ENCODE measurements at regions of chr10 and their contacts with region 1.

Region 1: DNA sequence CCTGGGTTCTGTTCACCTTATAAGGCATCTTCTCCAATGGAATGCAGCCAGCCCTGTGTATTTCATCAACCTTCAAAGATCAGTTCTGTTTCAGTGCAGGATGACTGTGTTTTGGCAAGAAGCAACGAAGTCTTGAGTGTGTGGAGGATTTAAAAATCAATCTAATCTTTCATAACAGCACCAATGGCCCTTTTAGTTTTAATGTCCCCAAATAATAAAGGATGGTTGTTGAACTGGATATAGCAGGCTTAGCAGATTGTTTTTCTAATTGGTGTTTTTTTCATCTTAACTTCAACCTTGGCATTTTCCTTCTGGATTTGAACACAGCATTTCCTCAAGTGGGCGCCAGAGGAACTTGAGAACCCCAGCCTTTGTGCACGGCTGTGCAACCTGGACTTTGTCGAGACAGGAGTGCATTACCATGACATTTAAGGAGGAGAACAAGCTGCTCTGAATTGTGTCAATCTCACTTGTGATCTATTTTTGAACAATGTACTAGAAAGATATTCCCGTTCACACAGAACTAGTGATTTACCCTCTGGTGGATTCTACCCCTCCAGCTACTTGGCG is 313.3 kb upstream of the AKR1E2 start:
- DNase-seq: peak; percentile 44
- H3K4me3 ChIP-seq: no peak overlapping the region
- H3K27ac ChIP-seq: no peak overlapping the region
- H3K4me1 ChIP-seq: peaks cover 0 to 20% (median 0%) of the 10 kb centered on the region in 4 donors
- H3K27me3 ChIP-seq: no peaks in the 10 kb centered on the region
- CTCF ChIP-seq: peak; percentile 32 to 68 (median 49)
- EP300 ChIP-seq: no peak
- POLR2A ChIP-seq: no peak

Region 2: DNA sequence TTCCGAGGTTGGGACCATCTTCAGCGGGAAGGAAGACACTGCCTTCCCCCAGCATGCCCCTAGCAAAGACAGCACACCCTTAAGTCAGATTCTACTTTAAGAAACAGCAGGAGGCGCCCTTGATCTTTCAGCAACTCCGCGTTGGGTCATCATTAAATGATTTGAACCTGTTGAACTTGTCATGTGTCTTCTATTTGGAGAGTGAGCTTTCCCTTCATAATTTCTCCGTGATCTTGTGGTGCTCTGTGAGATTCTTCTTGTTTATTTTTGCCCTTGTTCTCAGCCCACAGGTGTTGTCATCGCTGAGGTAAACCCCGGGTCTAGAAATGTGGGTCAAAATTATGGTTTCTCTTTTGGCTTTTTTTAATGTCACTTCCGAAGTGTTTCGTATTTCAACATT is 1290.7 kb before region 1 on chr10:
- in situ Hi-C with region 1: loop called in 1 of 4 experiments (anchors 25 kb)
- intact Hi-C with region 1: no loop called
- DNase-seq: no peak
- H3K4me3 ChIP-seq: no peak overlapping the region
- H3K27ac ChIP-seq: no peak overlapping the region
- H3K4me1 ChIP-seq: peaks cover 0 to 4% (median under 1%) of the 10 kb centered on the region in 4 donors
- H3K27me3 ChIP-seq: no peaks in the 10 kb centered on the region
- CTCF ChIP-seq: no peak
- EP300 ChIP-seq: no peak
- POLR2A ChIP-seq: no peak

Region 3: GRCh38 chr10:4450956-4451908 is 61.5 kb before region 1 on chr10:
- in situ Hi-C with region 1: no loop called
- intact Hi-C with region 1: no loop called
- DNase-seq: no peak
- H3K4me3 ChIP-seq: no peak overlapping the region
- H3K27ac ChIP-seq: no peak overlapping the region
- H3K4me1 ChIP-seq: no peaks in the 10 kb centered on the region
- H3K27me3 ChIP-seq: no peaks in the 10 kb centered on the region
- CTCF ChIP-seq: no peak
- EP300 ChIP-seq: no peak
- POLR2A ChIP-seq: no peak

Region 4: DNA sequence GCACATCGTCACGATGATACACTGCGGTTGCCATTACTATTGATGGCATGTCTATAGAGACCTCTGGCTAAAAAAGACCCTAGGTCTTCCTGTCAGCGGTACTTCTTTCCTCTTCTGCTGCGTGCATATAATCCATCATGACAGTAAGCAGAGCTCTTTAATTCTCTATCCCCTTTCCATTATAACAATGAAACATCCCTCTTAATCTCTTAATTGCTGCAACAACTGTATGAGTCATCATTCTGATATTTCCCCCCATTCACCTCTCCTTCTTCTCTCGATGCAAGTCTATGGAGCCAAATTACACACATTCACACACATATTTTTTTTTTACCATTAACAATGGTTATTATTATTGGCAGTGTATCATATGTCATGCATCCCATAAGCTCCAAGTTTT is 268.0 kb after region 1 on chr10:
- in situ Hi-C with region 1: no loop called
- intact Hi-C with region 1: no loop called
- DNase-seq: no peak
- H3K4me3 ChIP-seq: no peak overlapping the region
- H3K27ac ChIP-seq: no peak overlapping the region
- H3K4me1 ChIP-seq: no peaks in the 10 kb centered on the region
- H3K27me3 ChIP-seq: peaks cover 10% of the 10 kb centered on the region
- CTCF ChIP-seq: no peak
- EP300 ChIP-seq: no peak
- POLR2A ChIP-seq: no peak

Region 5: DNA sequence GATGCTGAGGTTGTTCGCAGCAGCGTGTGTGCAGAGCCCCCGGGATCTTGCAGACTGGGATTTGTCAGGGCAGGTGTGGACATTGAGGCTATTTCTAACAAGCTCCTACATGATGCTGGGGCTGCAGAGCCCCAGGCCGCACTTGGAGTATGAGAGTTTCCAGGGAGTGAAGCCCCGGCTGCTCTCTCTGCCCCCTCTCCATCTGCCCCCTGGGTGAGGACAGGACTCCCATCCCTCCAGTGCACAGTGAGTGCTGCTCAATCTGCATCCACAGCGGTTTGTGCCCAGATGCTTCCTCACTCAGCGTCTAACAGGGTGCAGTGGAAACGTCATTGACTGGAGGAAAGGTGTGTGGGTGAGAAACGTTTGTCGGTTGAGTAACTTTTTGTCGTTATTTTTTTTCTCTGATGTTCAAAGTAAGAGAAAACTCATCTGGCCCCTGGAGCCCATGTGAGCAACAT is 1524.1 kb after region 1 on chr10:
- in situ Hi-C with region 1: no loop called
- intact Hi-C with region 1: loop called (anchors 5 kb)
- DNase-seq: no peak
- H3K4me3 ChIP-seq: no peak overlapping the region
- H3K27ac ChIP-seq: no peak overlapping the region
- H3K4me1 ChIP-seq: peaks cover 0 to 7% (median 0%) of the 10 kb centered on the region in 4 donors
- H3K27me3 ChIP-seq: no peaks in the 10 kb centered on the region
- CTCF ChIP-seq: no peak
- EP300 ChIP-seq: no peak
- POLR2A ChIP-seq: no peak

Measured in transverse colon (tissue), 4 donors.